ENCODE measurements at regions of chr1 and their contacts with region 1.

Region 1: DNA sequence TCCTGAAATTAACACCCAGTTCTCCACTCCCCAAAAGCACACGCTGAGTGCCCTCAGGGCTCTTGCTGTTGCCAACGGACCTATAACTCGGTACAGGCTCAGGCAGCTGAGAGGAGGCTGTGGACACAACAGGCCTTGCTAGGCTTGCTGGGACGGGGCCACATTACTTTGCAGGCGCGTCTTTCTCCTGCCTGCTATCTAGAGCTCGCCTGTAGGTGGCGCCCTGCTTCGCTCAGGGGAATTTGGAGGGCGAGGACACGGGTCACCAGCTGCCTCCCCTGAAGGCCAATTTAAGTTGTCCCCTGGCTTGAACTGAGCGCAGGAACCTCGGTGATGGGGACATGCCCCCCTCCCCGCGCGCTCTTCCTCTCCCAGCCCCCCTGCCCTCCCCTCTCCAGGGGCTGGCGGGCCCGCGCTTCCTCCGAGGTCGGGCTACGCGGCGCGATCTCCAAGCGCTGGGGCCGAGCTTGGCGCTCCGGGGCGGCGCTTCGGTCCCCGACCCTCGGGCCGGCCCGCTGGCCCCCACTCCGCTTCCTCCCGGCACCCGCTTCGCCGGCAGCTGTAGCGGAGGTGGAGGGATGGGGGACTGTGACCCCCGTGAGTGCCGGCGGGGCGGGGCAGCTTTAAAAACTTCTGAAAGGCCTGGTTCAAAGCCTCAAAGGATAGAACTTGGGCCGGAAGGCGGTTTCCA is 32.4 kb upstream of the NFIA start:
- DNase-seq: peak; percentile 87
- H3K4me3 Mint-ChIP-seq: peak overlapping the region; percentile 70
- H3K27ac Mint-ChIP-seq: no peak overlapping the region
- H3K4me1 Mint-ChIP-seq: peaks cover 26% of the 10 kb centered on the region
- H3K27me3 Mint-ChIP-seq: peaks cover 51% of the 10 kb centered on the region

Region 2: DNA sequence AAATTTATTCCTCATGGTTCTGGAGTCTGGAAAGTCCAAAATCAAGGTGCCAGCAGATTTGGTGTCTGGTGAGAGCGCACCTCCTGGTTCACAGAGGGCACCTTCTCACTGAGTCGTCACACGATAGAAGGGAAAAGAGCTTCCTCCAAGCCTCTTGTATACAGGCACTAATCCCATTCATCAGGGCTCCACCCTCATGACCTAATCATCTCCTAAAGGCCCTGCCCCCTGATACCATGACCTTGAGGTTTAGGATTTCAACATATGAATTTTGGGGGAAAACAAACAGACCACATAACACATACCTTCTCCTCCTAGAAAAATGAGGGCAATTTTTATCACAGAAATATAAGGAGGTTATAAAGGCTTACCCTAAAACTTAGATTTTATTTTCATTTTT is 55.6 kb before region 1 on chr1:
- CTCF ChIA-PET with region 1: no interaction called
- POLR2A ChIA-PET with region 1: no interaction called
- DNase-seq: no peak
- H3K4me3 Mint-ChIP-seq: no peak overlapping the region
- H3K27ac Mint-ChIP-seq: no peak overlapping the region
- H3K4me1 Mint-ChIP-seq: no peaks in the 10 kb centered on the region
- H3K27me3 Mint-ChIP-seq: peaks cover 4% of the 10 kb centered on the region

Region 3: GRCh38 chr1:61011561-61012263 is 38.3 kb before region 1 on chr1:
- CTCF ChIA-PET with region 1: no interaction called
- POLR2A ChIA-PET with region 1: no interaction called
- DNase-seq: no peak
- H3K4me3 Mint-ChIP-seq: no peak overlapping the region
- H3K27ac Mint-ChIP-seq: no peak overlapping the region
- H3K4me1 Mint-ChIP-seq: no peaks in the 10 kb centered on the region
- H3K27me3 Mint-ChIP-seq: peaks cover 13% of the 10 kb centered on the region

Region 4: DNA sequence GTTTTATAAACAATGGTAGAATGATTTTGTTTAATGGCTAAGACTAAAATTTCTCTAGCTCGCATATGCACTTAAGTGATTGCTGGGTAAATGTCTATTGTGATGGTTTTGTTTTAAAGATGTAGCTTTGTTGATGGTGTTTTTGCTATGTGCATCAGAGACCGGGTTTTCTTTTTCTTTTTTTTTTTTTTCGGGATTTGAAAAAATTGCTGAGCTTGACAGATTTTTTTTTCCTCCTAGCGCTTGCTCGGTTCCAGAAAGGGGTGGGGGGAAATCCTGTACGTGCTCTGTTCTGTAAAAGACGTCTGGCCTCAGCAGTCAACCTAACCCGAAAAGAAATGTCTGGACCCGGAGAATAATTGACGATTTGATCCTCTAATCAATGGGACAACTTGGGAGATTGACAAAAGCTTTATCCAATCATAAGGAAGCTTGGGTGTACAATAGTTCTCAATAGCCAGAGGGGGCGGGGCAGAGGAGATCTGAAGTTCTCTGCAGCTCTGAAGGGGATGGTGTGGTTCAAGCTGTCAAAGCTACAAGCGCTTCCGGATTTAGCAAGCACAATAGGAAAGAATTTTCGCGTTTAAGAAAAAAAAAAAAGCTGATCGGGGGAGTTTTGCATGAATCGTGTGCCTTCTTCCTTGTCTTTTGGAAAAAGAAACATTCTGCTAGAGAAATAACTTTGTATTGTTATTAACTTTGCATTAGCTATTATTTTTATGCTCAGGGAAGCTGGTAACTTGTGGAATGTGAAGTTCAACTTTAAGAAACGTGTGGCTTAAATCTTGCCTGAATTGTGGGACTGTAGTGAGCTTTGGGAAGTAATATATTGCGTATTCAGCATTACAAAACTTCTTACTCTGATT is 27.9 kb after region 1 on chr1:
- CTCF ChIA-PET with region 1: interaction called, 17 read pairs
- POLR2A ChIA-PET with region 1: interaction called, 4 read pairs
- DNase-seq: peak; percentile 96
- H3K4me3 Mint-ChIP-seq: peak overlapping the region; percentile 90
- H3K27ac Mint-ChIP-seq: peak overlapping the region; percentile 99
- H3K4me1 Mint-ChIP-seq: peaks cover 51% of the 10 kb centered on the region
- H3K27me3 Mint-ChIP-seq: peaks cover 44% of the 10 kb centered on the region

Region 5: DNA sequence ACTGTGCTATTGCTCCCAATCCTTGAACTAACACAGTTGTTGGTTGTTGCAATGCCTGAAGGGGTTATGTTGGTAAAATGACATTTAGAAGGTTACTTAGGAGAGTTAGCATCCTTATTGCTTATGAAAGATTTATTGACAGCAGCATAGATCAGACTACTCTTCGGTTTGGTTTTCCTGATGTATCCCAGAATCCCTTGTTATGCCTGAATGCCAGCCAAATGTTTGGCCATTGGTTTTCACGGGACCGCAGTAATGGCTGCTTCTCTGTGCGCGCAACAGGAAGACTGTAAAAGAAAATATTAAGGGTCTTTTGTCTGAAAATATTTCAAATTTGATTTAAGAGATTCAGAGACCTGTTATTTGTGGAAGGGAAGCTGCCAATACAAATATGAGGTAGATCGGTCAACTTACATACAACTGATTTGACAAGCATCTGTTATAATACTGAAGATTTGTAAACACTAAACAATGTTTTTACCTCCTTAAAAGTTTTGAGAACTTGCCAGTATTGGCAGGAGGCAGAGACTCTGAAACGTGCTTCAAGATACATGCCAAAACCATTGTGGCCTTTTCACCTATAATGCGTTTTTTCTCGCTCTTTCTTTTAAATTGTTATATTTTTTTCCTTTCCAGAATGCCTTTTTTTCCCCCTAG is 40.7 kb after region 1 on chr1:
- CTCF ChIA-PET with region 1: no interaction called
- POLR2A ChIA-PET with region 1: no interaction called
- DNase-seq: no peak
- H3K4me3 Mint-ChIP-seq: no peak overlapping the region
- H3K27ac Mint-ChIP-seq: no peak overlapping the region
- H3K4me1 Mint-ChIP-seq: no peaks in the 10 kb centered on the region
- H3K27me3 Mint-ChIP-seq: peaks cover 20% of the 10 kb centered on the region

Region 6: GRCh38 chr1:61287734-61288133 is 237.7 kb after region 1 on chr1:
- CTCF ChIA-PET with region 1: no interaction called
- POLR2A ChIA-PET with region 1: no interaction called
- DNase-seq: no peak
- H3K4me3 Mint-ChIP-seq: no peak overlapping the region
- H3K27ac Mint-ChIP-seq: no peak overlapping the region
- H3K4me1 Mint-ChIP-seq: no peaks in the 10 kb centered on the region
- H3K27me3 Mint-ChIP-seq: peaks cover 3% of the 10 kb centered on the region

Measured in activated CD4-positive, alpha-beta T cell treated with anti-CD3 and anti-CD28 coated beads, Interleukin-2, amount 10 ng/mL, durations not matched to agents 7 days and 5 days (primary cell).